ENCODE measurements at regions of chr19 and their contacts with region 1.

Region 1: DNA sequence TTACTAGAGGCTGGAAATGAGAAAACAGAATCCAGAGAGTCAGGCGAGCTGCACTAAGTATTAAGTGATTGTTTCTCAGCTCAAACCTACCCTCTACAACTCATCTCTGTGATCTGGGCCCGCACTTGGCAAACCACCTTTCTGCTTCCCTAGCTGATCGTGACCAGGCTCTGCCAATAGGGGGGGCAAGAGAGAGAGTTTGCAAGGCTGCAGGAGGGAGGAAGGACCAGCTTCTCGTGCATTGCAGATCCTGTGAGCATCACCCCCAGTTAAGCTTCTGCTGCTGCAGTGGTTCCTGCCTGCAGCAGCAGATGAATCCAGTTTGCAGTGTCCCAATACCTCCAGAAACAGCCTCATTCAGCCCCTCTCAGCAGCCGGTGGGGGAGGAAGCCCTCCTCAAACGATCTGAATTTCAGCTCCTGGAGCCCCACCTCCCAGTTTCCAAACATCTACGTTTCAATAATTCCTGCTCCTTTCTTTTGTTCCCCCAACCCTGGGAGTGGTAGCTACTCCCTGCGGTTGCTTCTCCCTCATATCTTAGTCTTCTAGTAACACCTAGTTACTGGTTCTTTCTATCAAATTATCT is 20.0 kb downstream of the XRCC1 start:
- DNase-seq: peak; percentile 17
- H3K4me3 ChIP-seq: no peak overlapping the region
- CTCF ChIP-seq: peak; percentile 91

Region 2: GRCh38 chr19:43474986-43475705 is 80.1 kb before region 1 on chr19:
- CTCF ChIA-PET with region 1: no interaction called
- POLR2A ChIA-PET with region 1: no interaction called
- DNase-seq: peak; percentile 53
- H3K4me3 ChIP-seq: peak overlapping the region; percentile 45
- CTCF ChIP-seq: no peak

Region 3: GRCh38 chr19:43532962-43533545 is 22.2 kb before region 1 on chr19 and contains the start of gene ZNF575:
- CTCF ChIA-PET with region 1: interaction called, 208 read pairs
- POLR2A ChIA-PET with region 1: interaction called, 4 read pairs
- DNase-seq: peak; percentile 79
- H3K4me3 ChIP-seq: peak within 1 kb of the TSS; percentile 66
- CTCF ChIP-seq: no peak

Region 4: DNA sequence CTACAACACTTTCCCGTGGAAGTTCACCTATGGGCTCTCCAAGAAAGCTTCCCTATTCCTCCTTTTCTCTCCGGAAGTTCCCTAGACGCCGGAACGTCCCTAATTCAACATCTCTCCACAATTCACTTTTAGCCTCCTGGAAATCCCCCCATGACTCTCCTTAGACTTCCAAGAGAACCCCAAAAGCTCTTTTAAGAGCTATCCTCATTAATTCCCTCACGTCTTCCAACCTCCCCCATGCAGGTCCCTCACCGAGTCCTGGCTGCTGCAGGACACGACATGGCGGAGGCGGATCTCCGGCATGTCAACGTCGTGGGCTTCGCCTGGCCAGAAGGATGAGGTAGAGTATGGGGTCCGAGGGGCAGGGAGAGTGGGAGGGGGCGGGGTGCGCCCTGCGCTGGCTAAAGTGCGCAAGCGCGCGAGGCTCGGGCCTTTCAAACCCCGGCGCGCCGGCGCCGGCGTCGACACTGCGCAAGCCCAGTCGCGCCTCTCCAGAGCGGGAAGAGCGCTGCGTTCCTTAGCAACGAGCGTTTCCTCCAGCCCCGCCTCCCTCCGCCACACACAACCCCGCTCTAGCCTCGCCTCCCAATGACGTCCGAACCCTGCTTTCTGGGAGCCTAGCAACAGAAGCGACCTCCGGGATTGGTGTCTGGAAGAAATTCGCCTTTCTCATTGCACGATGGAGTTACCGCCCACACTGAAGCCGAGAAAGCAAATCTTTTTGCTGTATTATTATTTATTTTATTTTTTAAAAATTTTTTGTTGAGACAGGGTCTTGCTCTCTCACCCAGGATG is 20.1 kb after region 1 on chr19 and contains the starts of genes PINLYP and XRCC1:
- CTCF ChIA-PET with region 1: interaction called, 21 read pairs
- POLR2A ChIA-PET with region 1: no interaction called
- DNase-seq: peak; percentile 80
- H3K4me3 ChIP-seq: peak within 1 kb of the TSS; percentile 92
- CTCF ChIP-seq: no peak

Region 5: GRCh38 chr19:43651758-43652545 is 96.7 kb after region 1 on chr19:
- CTCF ChIA-PET with region 1: interaction called, 32 read pairs
- POLR2A ChIA-PET with region 1: no interaction called
- DNase-seq: no peak
- H3K4me3 ChIP-seq: no peak overlapping the region
- CTCF ChIP-seq: peak; percentile 83

Measured in AG04449 (cell line).